Activated naive CD4-positive, alpha-beta T cell treated with anti-CD3 and anti-CD28 coated beads, Interleukin-2, amount 10 ng/mL, durations not matched to agents 7 days and 5 days (primary cell): ENCODE measurements at regions of chr4 and their contacts with region 1.

Region 1: GRCh38 chr4:153750197-153750817 is 9.5 kb downstream of the RNF175 start:
- DNase-seq: peak; percentile 80
- H3K4me3 Mint-ChIP-seq: no peak overlapping the region
- H3K27ac Mint-ChIP-seq: no peak overlapping the region
- H3K4me1 Mint-ChIP-seq: peaks cover 10% of the 10 kb centered on the region
- H3K27me3 Mint-ChIP-seq: peaks cover 10% of the 10 kb centered on the region

Region 2: GRCh38 chr4:153513596-153513995 is 236.7 kb before region 1 on chr4:
- CTCF ChIA-PET with region 1: no interaction called
- DNase-seq: no peak
- H3K4me3 Mint-ChIP-seq: no peak overlapping the region
- H3K27ac Mint-ChIP-seq: no peak overlapping the region
- H3K4me1 Mint-ChIP-seq: peaks cover 33% of the 10 kb centered on the region
- H3K27me3 Mint-ChIP-seq: no peaks in the 10 kb centered on the region

Region 3: DNA sequence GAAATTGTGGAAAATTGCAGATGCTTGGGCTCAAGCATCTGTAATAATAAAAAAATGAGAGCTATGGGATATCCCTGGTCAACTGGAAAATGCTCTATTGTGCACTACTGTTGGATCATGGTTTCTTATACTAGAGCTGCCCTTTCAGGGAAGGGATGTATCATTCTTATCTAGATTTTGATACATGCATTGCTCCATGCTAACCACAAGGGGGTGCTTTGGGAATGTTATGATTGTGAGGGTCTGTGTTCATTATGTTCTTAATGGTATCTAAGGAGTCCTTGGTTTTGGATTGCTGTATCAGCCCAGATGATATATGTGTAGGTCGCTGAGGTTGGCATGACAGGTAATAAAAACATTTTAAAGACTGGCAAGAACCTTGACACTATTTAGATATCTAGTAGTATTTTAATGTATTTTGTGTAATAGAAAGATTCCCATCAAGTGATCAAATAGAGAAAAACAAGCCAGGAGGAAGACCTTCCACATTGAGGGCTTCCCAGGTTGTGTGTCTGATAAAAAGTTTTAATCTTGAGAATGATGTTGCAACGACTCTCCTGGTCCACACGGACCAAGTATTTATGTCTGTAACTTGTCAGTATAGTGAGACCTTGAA is 115.5 kb before region 1 on chr4:
- CTCF ChIA-PET with region 1: interaction called, 36 read pairs
- DNase-seq: no peak
- H3K4me3 Mint-ChIP-seq: no peak overlapping the region
- H3K27ac Mint-ChIP-seq: no peak overlapping the region
- H3K4me1 Mint-ChIP-seq: no peaks in the 10 kb centered on the region
- H3K27me3 Mint-ChIP-seq: no peaks in the 10 kb centered on the region

Region 4: DNA sequence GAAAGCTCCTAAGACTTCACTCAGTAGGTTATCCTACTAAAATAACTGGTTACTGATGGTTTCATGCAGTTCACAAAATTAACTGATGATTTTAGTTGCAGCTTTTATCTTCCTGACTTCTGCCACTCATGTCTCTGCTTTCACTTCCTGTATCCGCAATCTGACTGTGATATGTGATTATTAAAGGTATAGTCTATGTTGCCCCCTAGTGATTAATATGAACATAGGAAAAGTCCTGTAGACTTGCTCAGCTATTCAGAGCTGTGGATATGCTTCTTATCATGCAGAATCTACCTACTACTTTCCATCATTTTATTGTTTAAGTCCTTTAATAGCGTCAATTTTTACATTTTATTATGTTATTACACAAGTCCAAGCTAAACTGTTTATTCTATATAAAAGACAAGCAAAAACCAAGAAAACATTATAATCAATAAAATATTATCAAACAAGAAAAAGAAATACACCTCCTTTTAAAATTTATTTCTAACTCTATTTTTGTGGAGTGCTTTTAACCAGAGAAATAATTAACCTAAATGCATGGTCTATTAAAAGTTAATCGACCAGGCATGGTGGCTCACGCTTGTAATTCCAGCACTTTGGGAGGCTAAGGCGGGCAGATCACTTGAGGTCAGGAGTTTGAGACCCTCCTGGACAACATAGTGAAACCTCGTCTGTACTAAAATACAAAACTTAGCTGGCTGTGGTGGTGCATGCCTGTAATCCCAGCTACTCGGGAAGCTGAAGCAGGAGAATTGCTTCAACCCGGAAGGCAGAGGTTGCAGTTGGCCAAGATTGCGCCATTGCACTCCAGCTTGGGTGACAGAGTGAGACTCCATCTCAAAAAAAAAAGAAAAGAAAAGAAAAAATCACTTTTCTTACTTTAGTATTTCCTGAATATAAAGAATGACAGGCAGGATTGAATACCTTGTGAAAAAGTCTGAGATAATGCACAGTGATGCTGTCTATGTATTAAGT is 106.6 kb before region 1 on chr4:
- CTCF ChIA-PET with region 1: interaction called, 70 read pairs
- DNase-seq: no peak
- H3K4me3 Mint-ChIP-seq: no peak overlapping the region
- H3K27ac Mint-ChIP-seq: no peak overlapping the region
- H3K4me1 Mint-ChIP-seq: peaks cover 19% of the 10 kb centered on the region
- H3K27me3 Mint-ChIP-seq: no peaks in the 10 kb centered on the region

Region 5: DNA sequence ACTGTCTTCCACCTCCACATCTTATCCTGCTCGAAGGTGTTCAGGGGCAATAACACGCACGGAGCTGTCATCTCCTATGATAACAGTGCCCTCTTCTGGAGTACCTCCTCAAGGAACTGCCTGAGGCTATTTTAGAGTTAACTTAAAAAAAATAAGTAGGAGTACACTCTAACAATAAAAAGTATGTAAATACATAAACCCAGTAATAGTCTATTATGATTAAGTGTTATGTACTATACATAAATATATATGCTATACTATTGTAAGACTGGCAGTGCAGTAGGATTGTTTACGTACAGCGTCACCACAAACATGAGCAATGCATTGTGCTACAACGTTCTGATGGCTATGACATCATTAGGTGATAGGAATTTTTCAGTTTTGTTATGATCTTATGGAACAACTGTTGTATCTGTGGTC is 100.7 kb before region 1 on chr4:
- CTCF ChIA-PET with region 1: interaction called, 70 read pairs
- DNase-seq: no peak
- H3K4me3 Mint-ChIP-seq: no peak overlapping the region
- H3K27ac Mint-ChIP-seq: no peak overlapping the region
- H3K4me1 Mint-ChIP-seq: peaks cover 38% of the 10 kb centered on the region
- H3K27me3 Mint-ChIP-seq: no peaks in the 10 kb centered on the region

Region 6: DNA sequence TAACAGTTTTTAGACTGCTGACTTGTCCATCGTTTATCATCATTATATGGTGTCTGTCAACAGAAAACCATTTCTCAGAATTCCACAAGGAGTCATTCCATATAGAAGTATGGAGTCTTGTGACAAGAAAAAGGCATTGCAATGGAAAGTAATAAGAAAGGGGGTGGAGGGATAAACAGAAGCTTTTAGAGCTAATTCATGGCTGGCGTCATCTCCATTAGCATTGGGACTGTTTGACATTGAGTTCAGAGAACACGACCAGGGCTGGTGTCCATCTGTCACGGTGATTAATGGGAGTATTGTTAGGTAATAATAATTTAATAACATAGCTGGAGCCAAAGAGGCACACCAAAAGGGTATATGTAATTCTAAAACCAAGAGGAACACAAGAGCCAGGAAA is 140.5 kb after region 1 on chr4:
- CTCF ChIA-PET with region 1: no interaction called
- DNase-seq: no peak
- H3K4me3 Mint-ChIP-seq: no peak overlapping the region
- H3K27ac Mint-ChIP-seq: no peak overlapping the region
- H3K4me1 Mint-ChIP-seq: no peaks in the 10 kb centered on the region
- H3K27me3 Mint-ChIP-seq: no peaks in the 10 kb centered on the region

Region 7: GRCh38 chr4:153962311-153963039 is 212.2 kb after region 1 on chr4:
- CTCF ChIA-PET with region 1: no interaction called
- DNase-seq: no peak
- H3K4me3 Mint-ChIP-seq: no peak overlapping the region
- H3K27ac Mint-ChIP-seq: no peak overlapping the region
- H3K4me1 Mint-ChIP-seq: no peaks in the 10 kb centered on the region
- H3K27me3 Mint-ChIP-seq: peaks cover 4% of the 10 kb centered on the region

Region 8: DNA sequence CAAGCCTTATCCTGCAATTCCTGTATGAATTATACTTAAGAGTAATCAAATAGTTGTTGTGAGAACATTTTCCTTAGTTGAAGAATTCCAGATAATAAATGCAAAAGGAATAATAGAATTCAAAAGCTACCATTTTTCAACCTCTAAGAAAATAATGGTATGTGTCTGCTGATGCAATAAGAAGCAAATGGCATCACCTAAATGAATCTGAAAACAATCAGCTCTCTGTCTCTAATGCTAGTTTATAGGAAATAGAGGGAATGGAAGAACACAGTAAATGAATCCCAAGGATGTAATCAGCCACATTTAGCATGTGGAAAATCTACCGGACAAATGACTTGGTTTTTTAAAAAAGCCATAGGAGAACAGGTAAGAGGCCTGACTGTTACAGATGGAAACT is 626.2 kb after region 1 on chr4:
- CTCF ChIA-PET with region 1: no interaction called
- DNase-seq: no peak
- H3K4me3 Mint-ChIP-seq: no peak overlapping the region
- H3K27ac Mint-ChIP-seq: no peak overlapping the region
- H3K4me1 Mint-ChIP-seq: no peaks in the 10 kb centered on the region
- H3K27me3 Mint-ChIP-seq: peaks cover 16% of the 10 kb centered on the region